ENCODE measurements at regions of chr11 and their contacts with region 1.

Region 1: DNA sequence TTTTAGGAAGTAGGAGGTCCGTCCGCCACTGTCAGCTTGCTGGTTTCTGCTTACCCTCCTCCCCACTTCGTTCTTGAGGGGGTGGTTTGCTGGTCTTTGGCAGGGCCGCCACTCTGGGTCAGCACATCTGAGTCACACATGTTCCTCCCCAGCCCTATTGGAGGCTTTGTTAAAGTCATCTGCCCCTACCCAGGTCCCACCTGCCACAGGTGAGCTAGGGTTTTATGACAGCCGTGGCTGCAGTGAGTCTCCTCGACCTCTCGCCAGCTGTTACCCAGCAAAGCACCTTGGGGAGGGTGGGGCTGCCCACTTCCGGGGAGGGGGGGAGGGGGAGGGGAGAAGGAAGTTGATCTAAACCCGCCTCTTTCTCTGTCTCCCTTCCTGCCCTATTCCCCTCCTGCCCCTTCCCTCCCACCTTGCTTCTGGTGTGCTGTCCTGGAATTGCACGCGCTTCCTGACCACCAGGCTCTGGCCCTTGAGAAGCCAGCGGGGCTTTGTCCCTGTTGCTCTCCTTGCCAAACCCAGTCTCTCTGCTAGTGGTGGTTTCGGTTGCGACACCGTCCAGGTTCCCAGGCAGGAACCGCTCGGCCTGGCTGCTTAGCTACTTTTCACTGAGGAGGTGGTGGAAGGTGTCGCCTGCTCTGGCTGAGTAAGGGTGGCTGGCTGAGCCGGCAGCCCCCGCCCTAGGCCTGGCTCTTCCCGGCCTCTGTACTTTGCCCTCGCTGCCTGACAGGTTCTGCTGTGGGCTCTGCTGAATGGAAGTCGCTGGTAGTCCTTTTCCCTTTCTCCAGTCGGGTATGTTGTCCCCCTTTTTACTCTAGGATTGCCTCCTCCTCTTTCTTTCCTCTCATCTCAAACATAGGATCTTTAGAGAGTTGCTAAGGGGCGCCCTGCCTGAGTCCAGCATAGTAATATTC is 28.5 kb downstream of the RCOR2 start:
- DNase-seq: peak; percentile 91
- H3K4me3 Mint-ChIP-seq: peak overlapping the region; percentile 74
- H3K27ac Mint-ChIP-seq: peak overlapping the region; percentile 80
- H3K4me1 Mint-ChIP-seq: peaks cover 42% of the 10 kb centered on the region
- H3K27me3 Mint-ChIP-seq: no peaks in the 10 kb centered on the region
- CTCF ChIP-seq: no peak

Region 2: GRCh38 chr11:63845303-63845702 is 43.1 kb before region 1 on chr11:
- CTCF ChIA-PET with region 1: interaction called, 6 read pairs
- POLR2A ChIA-PET with region 1: interaction called, 22 read pairs
- intact Hi-C with region 1: loop called (anchors 5 kb)
- DNase-seq: peak; percentile 69
- H3K4me3 Mint-ChIP-seq: peak overlapping the region; percentile 23
- H3K27ac Mint-ChIP-seq: peak overlapping the region; percentile 70
- H3K4me1 Mint-ChIP-seq: peaks cover 36% of the 10 kb centered on the region
- H3K27me3 Mint-ChIP-seq: no peaks in the 10 kb centered on the region
- CTCF ChIP-seq: no peak

Region 3: DNA sequence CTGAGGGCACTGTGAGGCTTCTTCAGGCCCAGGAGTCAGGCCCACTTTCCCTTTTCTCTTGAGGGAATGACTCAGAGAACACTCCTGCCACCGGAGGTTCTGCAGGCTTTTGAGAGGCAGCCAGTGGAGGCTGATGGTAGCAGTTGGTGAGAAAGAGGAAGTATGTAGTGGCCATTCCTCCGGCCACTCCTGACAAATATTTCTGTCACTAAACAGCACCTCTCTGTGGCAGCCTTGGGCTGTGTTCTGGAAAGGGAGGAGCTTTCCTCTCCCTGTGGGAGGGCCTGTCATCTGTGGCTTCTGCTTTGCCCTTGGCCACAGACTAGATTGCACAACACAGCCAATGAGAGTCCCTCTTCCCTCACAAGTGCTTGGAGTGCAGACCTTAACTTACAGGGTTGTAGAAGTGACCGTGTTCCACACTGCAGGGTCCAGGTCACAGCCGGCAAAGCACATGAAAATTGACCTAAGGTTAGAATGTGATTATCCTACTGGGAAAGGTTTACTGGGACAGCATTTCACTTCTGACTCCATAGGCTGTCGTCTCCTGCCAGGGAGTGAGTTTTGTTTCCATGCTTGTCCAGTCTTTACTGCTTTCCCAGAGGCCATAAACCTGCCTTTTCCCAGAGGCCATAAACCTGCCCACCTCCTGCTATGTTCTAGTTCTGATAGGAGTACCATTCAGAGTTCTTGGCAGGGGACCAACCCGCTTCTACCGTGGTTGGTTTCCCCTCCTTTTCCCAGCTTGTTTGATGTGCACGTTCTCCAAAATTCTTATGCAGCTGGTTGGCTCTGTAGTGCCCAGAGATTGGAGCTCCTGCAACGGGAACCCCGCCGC is 16.2 kb before region 1 on chr11:
- CTCF ChIA-PET with region 1: interaction called, 7 read pairs
- POLR2A ChIA-PET with region 1: interaction called, 22 read pairs
- intact Hi-C with region 1: no loop called
- DNase-seq: peak; percentile 97
- H3K4me3 Mint-ChIP-seq: peak overlapping the region; percentile 33
- H3K27ac Mint-ChIP-seq: no peak overlapping the region
- H3K4me1 Mint-ChIP-seq: peaks cover 32% of the 10 kb centered on the region
- H3K27me3 Mint-ChIP-seq: no peaks in the 10 kb centered on the region
- CTCF ChIP-seq: peak; percentile 16

Region 4: DNA sequence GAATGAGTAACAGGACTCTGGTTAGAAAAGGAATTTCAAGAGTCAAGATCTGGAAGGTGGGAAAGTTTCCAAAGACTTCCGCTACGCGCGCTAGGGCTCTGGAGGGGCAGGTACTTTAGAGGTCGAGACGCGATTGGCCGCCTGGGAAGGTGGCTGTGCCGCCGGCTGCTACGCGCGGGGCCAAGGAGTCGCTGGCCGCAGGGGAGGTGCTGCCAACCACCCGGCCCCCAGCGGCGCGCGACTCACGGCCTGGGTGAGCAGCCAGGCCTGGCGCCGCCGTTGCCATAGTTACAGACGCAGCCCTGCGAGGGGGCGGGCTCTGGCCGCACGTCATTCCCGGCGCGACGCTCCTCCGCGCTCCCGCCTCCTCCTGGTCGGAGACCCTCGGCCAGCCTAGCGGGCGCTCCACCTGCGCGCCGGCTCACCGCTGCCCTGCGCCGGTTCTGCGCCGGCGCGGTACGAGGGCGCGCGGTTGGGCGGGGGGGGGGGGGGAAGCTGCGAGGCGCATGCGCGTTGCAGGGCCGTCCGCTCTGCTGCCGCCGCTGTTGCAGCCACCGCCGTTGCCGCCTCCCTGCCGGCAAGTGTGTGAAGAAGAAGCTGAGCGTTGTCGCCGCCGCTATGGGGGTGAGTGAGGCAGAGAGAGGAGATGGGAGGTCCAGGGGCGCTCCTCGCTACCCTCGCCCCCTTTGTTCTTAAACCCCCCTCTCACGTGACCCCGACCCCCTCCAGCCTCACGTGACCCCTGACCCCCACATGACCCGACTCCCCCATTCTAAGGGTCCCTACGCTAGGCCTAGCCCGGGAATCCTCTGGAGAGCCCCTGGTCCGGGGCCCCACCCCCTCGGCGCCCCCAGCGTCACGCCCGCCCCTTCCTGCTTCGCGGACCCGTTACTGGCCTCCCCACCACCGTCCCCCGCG is 50.3 kb after region 1 on chr11 and contains the start of gene NAA40:
- CTCF ChIA-PET with region 1: no interaction called
- POLR2A ChIA-PET with region 1: interaction called, 5 read pairs
- intact Hi-C with region 1: loop called (anchors 10 kb)
- DNase-seq: peak; percentile 96
- H3K4me3 Mint-ChIP-seq: peak within 1 kb of the TSS; percentile 83
- H3K27ac Mint-ChIP-seq: peak within 1 kb of the TSS; percentile 69
- H3K4me1 Mint-ChIP-seq: no peaks in the 10 kb centered on the region
- H3K27me3 Mint-ChIP-seq: no peaks in the 10 kb centered on the region
- CTCF ChIP-seq: no peak
- total RNA-seq, gene NAA40: 11.7 and 13.4 TPM in 2 replicates

Region 5: DNA sequence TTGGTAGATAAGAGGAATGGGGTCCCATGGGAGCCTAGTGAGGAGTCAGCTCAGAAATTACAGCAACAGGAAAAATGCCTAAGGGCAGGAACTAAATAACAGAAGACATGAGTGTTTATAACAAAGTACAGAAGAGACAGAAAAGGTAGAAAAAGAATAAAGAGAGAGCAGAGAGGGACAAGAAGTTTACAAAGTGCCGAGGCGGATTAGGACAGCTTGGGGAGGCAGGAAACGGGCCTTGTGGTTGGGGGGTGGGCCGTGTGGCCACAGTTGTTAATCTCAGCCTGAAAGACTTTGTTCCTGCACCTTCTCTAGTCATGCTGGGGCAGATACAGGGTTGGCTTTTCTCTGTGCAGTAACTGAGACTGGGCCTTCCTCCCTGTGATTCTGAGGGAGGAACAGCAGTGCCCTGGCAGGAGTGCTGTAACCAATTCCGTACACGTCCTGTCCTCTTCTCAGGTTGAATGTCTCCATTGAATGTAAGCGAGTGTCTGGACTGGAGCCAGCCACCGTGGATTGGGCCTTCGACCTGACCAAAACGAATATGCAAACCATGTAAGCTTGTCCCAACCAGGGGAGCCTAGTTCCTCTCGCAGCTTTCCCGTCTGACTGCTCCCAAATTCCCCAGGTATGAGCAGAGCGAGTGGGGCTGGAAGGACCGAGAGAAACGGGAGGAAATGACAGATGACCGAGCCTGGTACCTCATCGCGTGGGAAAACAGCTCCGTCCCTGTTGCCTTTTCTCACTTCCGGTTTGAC is 63.5 kb after region 1 on chr11:
- CTCF ChIA-PET with region 1: no interaction called
- POLR2A ChIA-PET with region 1: no interaction called
- intact Hi-C with region 1: no loop called
- DNase-seq: no peak
- H3K4me3 Mint-ChIP-seq: no peak overlapping the region
- H3K27ac Mint-ChIP-seq: no peak overlapping the region
- H3K4me1 Mint-ChIP-seq: no peaks in the 10 kb centered on the region
- H3K27me3 Mint-ChIP-seq: no peaks in the 10 kb centered on the region
- CTCF ChIP-seq: no peak

Measured in MCF 10A (cell line).